ENCODE measurements at regions of chr1 and their contacts with region 1.

Region 1: GRCh38 chr1:229625915-229626831 is at the starts of genes TAF5L and URB2:
- DNase-seq: peak; percentile 62 to 93
- H3K4me3 ChIP-seq: peak within 1 kb of the TSS; percentile 66 to 92
- H3K27ac ChIP-seq: peak within 1 kb of the TSS; percentile 73 to 96
- H3K4me1 ChIP-seq: peaks cover 8 to 28% of the 10 kb centered on the region in 2 donors
- H3K27me3 ChIP-seq: no peaks in the 10 kb centered on the region
- CTCF ChIP-seq: peak in 1 of 3 experiments; percentile 28
- total RNA-seq, gene TAF5L: 21.7 TPM
- total RNA-seq, gene URB2: 1.8 TPM

Region 2: GRCh38 chr1:229341774-229342655 is 284.2 kb before region 1 on chr1:
- intact Hi-C with region 1: loop called (anchors 10 kb)
- DNase-seq: peak; percentile 41 to 88
- H3K4me3 ChIP-seq: peak overlapping the region; percentile 75 to 87
- H3K27ac ChIP-seq: peak overlapping the region; percentile 87 to 89
- H3K4me1 ChIP-seq: peaks cover 5 to 6% of the 10 kb centered on the region in 2 donors
- H3K27me3 ChIP-seq: no peaks in the 10 kb centered on the region
- CTCF ChIP-seq: no peak

Region 3: DNA sequence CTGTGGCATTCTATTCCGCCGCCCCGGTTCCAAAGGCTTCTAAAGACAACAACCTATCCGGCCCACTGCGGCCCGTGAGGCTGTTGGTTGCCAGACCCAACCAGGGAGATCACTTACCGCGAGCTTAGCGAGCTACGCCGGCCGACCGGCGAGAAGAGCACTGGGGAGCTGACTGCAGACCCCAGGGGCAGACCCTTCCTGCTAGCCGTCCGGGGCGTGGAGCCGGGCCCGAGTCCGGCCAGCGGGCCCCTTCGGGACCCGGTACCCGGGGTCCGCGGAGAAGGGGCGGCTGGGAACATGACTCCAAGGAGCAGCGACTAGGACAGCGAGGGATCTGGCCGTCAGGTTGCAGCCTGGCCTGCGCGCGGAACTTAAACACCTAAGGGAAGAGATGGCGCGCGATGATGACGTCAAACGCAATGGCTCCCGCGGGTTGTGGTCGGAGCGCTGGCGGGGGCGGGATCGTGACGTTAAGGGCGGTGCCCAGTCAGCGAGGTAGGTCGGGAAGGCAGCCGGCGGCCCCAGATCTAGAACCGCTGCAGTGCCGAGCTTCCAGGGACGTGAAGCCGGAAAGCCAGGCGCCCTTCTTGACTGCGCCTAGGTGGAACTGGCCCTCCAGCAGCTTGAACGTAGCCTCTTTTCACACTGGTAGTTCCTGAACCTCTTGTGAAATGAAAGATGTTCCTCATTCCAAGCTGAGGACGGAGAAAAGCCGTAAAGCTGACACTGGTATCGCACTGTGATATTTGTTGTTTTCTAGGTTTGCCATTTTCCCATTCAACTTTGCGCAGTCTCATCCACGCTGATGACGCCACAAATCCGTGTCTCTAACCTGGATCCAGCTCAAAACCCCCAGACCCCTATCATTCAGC is 118.0 kb before region 1 on chr1 and contains the start of gene NUP133:
- intact Hi-C with region 1: loop called (anchors 1 kb)
- DNase-seq: peak; percentile 92 to 99
- H3K4me3 ChIP-seq: peak within 1 kb of the TSS; percentile 96 to 100
- H3K27ac ChIP-seq: peak within 1 kb of the TSS; percentile 89 to 98
- H3K4me1 ChIP-seq: peaks cover 7 to 11% of the 10 kb centered on the region in 2 donors
- H3K27me3 ChIP-seq: no peaks in the 10 kb centered on the region
- CTCF ChIP-seq: no peak
- total RNA-seq, gene NUP133: 9.3 TPM

Region 4: DNA sequence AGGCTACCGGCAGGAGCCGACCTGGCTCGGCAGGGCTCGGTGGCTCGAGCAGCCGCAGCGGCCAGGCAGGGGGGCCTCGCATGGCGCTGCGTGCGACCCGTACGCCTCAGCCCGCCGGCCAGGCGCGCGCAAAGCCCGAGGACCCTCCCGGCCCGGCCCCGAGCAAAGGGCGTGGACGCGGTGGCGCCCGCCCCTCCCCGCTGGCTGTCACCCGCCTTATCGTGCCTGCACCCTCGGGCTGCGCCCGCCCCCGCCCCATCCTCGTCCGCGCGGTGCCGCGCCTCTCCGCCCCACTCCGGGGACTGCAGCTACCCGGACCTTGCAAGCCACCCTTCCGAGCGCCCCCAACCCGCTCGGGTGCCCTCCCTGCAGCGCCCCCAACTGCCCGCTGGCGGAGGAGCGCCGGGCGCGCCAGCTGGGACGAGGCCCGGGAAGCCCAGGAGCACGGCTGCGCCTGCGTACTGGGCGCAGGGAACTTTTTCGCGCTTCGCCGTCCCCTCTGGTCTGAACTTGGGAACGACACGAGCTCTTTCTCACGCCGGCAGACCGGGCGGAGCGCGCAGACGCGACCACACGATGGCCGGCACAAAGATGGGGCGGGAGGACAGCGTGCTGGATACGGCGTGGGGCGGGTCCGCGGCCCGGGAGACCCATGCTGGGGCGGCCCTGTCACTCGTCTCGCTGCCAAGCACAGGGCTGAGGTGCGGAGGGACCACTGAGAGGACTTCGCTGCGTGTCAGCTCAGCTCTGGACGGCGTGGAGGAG is 67.4 kb before region 1 on chr1 and contains the start of gene ABCB10:
- intact Hi-C with region 1: loop called (anchors 1 kb)
- DNase-seq: peak; percentile 87 to 98
- H3K4me3 ChIP-seq: peak within 1 kb of the TSS; percentile 91 to 94
- H3K27ac ChIP-seq: peak within 1 kb of the TSS; percentile 85 to 94
- H3K4me1 ChIP-seq: peaks cover 3 to 38% of the 10 kb centered on the region in 2 donors
- H3K27me3 ChIP-seq: no peaks in the 10 kb centered on the region
- CTCF ChIP-seq: peak; percentile 81 to 89 (median 87)
- total RNA-seq, gene ABCB10: 25.2 TPM

Region 5: GRCh38 chr1:229596925-229597699 is 29.1 kb before region 1 on chr1:
- intact Hi-C with region 1: loop called (anchors 2 kb)
- DNase-seq: peak; percentile 53 to 94
- H3K4me3 ChIP-seq: peak overlapping the region in 1 of 2 donors; percentile 34
- H3K27ac ChIP-seq: peak overlapping the region; percentile 92 to 94
- H3K4me1 ChIP-seq: peaks cover 20 to 50% of the 10 kb centered on the region in 2 donors
- H3K27me3 ChIP-seq: no peaks in the 10 kb centered on the region
- CTCF ChIP-seq: peak in 2 of 3 experiments; percentile 21 to 39

Region 6: DNA sequence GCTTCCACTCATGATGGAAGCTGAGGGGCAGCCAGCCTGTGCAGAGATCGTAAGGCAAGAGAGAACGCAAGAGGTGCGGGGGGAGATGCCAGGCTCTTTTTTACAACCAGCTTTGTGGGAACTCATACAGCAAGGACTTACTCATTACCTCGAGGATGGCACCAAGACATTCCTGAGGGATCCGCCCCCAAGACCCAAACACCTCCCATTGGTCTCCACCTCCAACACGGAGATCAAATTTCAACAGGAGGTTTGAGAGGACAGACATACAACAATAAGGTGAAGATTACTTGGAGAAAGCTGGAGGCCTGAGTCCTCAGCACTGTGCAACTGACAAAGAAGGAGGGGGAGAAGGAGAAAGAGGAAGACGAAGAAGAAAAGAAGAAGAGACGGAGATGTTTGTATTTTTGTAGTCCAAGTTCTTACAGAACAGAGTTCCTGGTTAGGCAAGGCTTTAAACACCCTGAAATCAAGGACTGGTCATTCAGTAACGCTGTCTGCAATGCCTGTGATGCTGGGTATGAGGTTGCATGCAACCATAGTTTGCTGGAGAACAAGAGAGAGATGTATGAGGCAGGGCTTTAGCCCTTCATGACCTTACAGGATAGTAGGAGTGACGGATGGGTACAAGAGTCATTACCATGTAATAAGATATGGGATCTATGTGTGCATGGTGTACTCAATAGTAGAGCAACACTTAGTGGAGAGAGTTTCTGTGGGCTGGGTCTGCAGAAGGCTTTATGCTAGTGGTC is 421.1 kb after region 1 on chr1:
- intact Hi-C with region 1: no loop called
- DNase-seq: no peak
- H3K4me3 ChIP-seq: no peak overlapping the region
- H3K27ac ChIP-seq: no peak overlapping the region
- H3K4me1 ChIP-seq: no peaks in the 10 kb centered on the region
- H3K27me3 ChIP-seq: no peaks in the 10 kb centered on the region
- CTCF ChIP-seq: no peak

Region 7: GRCh38 chr1:230426246-230427093 is 800.3 kb after region 1 on chr1 and contains the start of gene PGBD5:
- intact Hi-C with region 1: no loop called
- DNase-seq: no peak
- H3K4me3 ChIP-seq: peak within 1 kb of the TSS; percentile 57 to 77
- H3K27ac ChIP-seq: no peak within 1 kb of the TSS
- H3K4me1 ChIP-seq: peaks cover 0 to 4% of the 10 kb centered on the region in 2 donors
- H3K27me3 ChIP-seq: peaks cover 11% of the 10 kb centered on the region
- CTCF ChIP-seq: no peak
- total RNA-seq, gene PGBD5: not detected